ENCODE measurements at regions of chr6 and their contacts with region 1.

Region 1: GRCh38 chr6:132279592-132280139 is 121.6 kb downstream of the MOXD1 start:
- DNase-seq: peak; percentile 73
- H3K4me3 Mint-ChIP-seq: peak overlapping the region; percentile 64
- H3K27ac Mint-ChIP-seq: no peak overlapping the region
- H3K4me1 Mint-ChIP-seq: no peaks in the 10 kb centered on the region
- H3K27me3 Mint-ChIP-seq: peaks cover 24% of the 10 kb centered on the region

Region 2: DNA sequence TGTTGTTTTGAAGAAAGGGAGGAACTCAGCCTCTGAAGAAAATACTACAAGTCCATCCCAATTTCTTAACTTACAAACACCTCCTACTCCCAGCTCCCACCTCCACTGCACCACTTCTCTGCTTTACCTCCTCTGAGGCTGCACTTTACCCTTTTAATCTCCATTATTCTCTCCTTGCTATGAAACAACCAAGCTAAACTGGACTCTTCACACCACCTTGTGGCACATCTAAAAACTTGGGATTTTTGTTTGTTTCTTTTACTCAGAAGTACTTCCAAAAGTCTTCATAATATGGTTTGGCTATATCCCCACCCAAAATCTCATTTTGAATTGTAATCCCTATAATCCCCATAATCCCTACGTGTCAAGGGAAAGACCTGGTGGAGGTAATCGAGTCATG is 20.6 kb before region 1 on chr6:
- CTCF ChIA-PET with region 1: interaction called, 16 read pairs
- POLR2A ChIA-PET with region 1: no interaction called
- DNase-seq: no peak
- H3K4me3 Mint-ChIP-seq: no peak overlapping the region
- H3K27ac Mint-ChIP-seq: no peak overlapping the region
- H3K4me1 Mint-ChIP-seq: no peaks in the 10 kb centered on the region
- H3K27me3 Mint-ChIP-seq: peaks cover 7% of the 10 kb centered on the region

Region 3: GRCh38 chr6:132289756-132290155 is 10.1 kb after region 1 on chr6:
- CTCF ChIA-PET with region 1: interaction called, 112 read pairs
- POLR2A ChIA-PET with region 1: interaction called, 4 read pairs
- DNase-seq: no peak
- H3K4me3 Mint-ChIP-seq: no peak overlapping the region
- H3K27ac Mint-ChIP-seq: no peak overlapping the region
- H3K4me1 Mint-ChIP-seq: no peaks in the 10 kb centered on the region
- H3K27me3 Mint-ChIP-seq: peaks cover 17% of the 10 kb centered on the region

Region 4: GRCh38 chr6:132471788-132472187 is 192.1 kb after region 1 on chr6:
- CTCF ChIA-PET with region 1: interaction called, 18 read pairs
- POLR2A ChIA-PET with region 1: no interaction called
- DNase-seq: no peak
- H3K4me3 Mint-ChIP-seq: no peak overlapping the region
- H3K27ac Mint-ChIP-seq: no peak overlapping the region
- H3K4me1 Mint-ChIP-seq: no peaks in the 10 kb centered on the region
- H3K27me3 Mint-ChIP-seq: no peaks in the 10 kb centered on the region

Region 5: DNA sequence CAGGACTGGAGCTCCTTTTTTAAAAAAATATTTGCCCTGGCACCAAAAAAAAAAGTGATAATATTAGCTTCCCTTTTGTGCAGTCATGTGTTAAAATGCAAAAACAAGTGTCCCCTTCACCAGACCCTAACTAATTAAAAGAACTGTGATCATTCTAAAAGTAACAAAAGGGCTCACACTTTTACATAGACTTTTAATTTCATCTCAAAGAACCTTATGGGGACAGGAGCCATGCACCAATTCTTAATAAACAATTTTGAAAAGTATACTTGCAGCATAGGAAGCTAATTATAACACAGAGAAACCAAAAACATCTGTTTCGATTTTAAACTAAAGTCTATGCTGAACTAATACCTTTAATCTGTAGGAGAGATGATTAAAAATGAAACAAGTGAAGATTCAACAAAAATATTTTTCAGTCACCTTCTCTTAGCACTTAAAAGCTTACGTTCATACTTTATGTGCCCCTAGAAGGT is 216.0 kb after region 1 on chr6:
- CTCF ChIA-PET with region 1: interaction called, 15 read pairs
- POLR2A ChIA-PET with region 1: no interaction called
- DNase-seq: no peak
- H3K4me3 Mint-ChIP-seq: no peak overlapping the region
- H3K27ac Mint-ChIP-seq: no peak overlapping the region
- H3K4me1 Mint-ChIP-seq: peaks cover 42% of the 10 kb centered on the region
- H3K27me3 Mint-ChIP-seq: no peaks in the 10 kb centered on the region

Measured in activated CD4-positive, alpha-beta memory T cell treated with anti-CD3 and anti-CD28 coated beads, Interleukin-2, amount 10 ng/mL, durations not matched to agents 7 days and 5 days (primary cell).